ENCODE measurements at regions of chr7 and their contacts with region 1.

Region 1: DNA sequence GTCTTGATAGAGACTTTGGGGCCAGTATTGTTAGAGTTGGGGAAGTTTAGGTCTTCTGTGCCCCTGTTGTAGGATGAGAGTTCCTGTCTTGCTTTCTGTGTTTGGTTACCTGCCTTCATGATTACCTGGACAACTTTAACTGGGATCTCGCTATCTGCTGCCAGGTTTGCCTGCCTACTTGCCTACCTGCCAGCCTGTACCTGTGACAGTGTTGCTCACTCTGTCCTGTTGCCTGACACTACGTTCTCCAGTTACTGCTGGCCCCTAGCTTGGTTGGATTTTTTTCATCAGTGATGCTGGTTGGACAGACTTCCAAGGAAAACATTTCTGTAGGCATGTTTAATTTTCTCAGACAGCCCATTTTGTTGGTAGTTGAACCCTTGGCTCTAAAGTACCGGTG is 48.4 kb downstream of the PPP1R9A start:
- DNase-seq: no peak
- H3K4me3 ChIP-seq: no peak overlapping the region
- H3K27ac ChIP-seq: no peak overlapping the region
- H3K4me1 ChIP-seq: no peaks in the 10 kb centered on the region
- H3K27me3 ChIP-seq: no peaks in the 10 kb centered on the region
- CTCF ChIP-seq: no peak

Region 2: DNA sequence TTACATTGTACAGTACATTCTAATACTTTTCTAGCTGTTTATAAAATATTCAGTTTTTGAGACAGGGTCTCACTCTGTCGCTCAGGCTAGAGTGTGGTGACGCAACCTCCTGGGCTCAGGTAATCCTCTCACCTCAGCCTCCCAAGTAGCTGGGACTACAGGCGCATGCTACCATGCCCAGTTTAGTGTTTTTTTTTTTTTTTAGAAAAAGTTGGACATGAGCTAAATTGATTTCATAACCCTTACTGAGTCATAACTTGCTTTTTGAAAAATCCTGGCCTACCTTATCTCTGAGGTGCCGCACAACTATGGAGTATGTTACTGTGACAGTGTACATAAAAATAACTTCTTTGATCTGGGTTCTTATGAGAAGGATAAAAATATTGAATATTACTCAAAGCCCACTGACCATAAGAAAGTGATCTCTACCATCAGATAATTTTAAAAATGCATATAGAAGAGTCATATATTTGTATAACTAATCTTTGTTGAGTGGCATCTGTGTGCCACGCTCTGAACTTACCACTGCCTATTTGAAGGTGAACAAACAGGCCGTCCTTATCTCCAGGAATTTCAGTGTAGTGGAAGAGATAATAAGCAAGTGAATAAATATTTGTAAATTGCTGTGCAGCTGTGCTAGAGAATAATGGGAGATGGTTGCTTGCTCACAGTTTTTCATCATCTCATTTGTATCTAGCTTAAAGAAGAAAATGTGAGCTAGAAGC is 24.8 kb after region 1 on chr7:
- intact Hi-C with region 1: loop called (anchors 1 kb)
- DNase-seq: no peak
- H3K4me3 ChIP-seq: no peak overlapping the region
- H3K27ac ChIP-seq: no peak overlapping the region
- H3K4me1 ChIP-seq: peaks cover 0 to 2% of the 10 kb centered on the region in 2 donors
- H3K27me3 ChIP-seq: no peaks in the 10 kb centered on the region
- CTCF ChIP-seq: no peak